Activated B cell treated with CpG ODN at 0.5 μM for 24 hours (primary cell): ENCODE measurements at regions of chr11 and their contacts with region 1.

Region 1: DNA sequence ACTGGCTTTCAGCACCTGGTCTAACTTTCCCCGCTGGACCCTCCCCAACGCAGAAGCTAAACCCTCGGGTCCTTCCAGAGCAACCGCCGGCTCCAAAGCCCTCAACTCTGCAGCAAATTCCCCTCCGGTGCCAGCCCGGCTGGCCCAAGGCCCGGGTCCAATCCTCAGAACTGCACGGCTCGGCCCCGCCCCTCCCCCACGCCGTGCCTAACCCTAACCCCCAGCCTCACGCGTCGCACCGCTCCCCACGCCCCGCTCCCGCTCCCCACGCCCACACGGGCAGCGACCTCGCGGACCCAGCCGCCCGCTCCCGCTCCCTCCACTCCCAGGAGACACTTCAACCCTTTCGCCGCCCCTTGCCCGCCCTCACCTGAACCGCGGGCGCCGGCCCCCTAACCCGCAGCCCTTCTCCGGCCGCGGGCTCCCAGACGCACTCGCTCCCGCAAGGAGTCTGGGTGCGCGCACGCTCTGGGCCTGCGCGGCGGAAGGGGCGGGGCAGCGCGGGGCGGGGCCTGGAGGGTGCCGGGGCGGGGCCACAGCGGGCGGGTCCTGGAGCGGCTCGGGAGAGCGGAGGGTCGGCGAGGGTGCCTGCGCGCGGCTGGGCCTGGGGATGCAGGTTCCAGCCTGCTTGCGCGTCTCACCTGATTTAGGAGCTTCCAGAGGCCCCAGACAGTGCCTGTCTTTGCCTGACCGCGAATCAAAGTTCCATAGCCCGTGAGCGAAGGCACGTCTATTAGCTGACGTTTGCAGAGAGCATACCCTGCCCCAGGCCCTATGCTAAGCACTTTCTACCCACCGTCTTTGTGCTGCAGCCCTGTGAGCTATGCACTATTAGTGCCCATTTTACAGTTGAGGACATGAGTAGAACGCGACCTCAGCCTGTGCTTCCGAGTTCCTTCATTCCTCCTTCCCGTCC is at the start of gene NFRKB:
- DNase-seq: peak; percentile 92
- ATAC-seq: peak; percentile 97
- H3K4me3 Mint-ChIP-seq: peak within 1 kb of the TSS; percentile 88
- H3K27ac Mint-ChIP-seq: peak within 1 kb of the TSS; percentile 70
- H3K4me1 Mint-ChIP-seq: peaks cover 19% of the 10 kb centered on the region
- H3K27me3 Mint-ChIP-seq: no peaks in the 10 kb centered on the region
- CTCF ChIP-seq: no peak
- total RNA-seq, gene NFRKB: 27.2 and 28.9 TPM in 2 replicates

Region 2: DNA sequence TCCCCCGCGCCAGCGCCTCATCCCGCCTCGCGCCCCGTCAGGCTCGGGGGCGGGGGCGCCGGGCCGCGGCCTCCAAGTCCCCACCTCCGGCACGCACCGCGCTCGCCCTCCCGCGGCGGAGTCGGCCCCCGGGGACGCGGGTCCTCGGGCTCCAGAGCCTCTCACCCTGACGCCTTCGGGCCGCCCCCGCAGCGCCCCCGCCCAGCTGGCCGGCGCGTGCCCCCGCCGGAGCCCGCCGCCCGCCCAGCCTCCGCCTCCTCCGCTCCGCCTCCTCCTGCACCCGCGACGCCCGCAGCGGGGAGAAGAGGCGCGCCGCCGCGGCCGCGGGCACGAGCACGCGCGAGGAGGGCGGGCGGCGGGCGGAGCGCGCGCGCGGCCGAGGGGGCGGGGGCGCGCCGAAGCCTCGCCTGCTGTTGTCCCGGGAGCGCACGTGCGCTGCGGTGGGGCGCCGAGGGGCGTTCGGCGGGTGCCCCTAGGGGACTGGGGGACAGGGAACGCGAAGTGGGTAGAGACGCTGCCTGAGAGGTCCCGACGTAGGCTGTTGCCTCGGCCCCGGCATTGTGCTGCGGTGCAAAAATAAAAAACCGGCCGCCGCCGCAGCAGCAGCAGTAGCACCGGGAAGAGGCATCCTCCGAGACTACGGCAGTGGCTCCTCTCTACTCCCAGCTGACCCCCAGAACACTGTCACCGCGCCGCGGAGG is 615.9 kb before region 1 on chr11:
- CTCF ChIA-PET with region 1: no interaction called
- POLR2A ChIA-PET with region 1: no interaction called
- intact Hi-C with region 1: loop called (anchors 1 kb)
- DNase-seq: peak; percentile 73
- ATAC-seq: peak; percentile 80
- H3K4me3 Mint-ChIP-seq: peak overlapping the region; percentile 79
- H3K27ac Mint-ChIP-seq: peak overlapping the region; percentile 47
- H3K4me1 Mint-ChIP-seq: peaks cover 24% of the 10 kb centered on the region
- H3K27me3 Mint-ChIP-seq: peaks cover 26% of the 10 kb centered on the region
- CTCF ChIP-seq: no peak

Region 3: DNA sequence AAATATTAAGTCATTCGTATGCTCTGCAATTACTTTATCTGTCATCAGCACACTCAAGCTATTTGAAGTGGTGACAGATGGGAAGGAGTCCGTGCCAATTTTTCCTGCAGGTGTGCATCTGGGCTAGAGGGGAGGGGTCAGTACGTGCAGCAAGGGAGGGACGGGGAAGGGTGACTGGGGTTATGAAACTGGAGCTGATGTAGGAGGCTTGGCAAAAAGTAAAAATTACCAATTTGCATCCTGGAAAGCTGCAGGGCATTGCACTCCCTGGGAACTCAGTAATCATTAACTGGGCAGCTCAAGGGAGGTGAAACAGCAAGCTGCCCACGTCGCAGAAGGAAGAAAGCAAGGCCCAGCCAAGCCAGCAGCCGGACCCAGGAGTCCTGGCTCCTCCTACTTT is 166.8 kb before region 1 on chr11:
- CTCF ChIA-PET with region 1: no interaction called
- POLR2A ChIA-PET with region 1: no interaction called
- intact Hi-C with region 1: no loop called
- DNase-seq: no peak
- ATAC-seq: no peak
- H3K4me3 Mint-ChIP-seq: no peak overlapping the region
- H3K27ac Mint-ChIP-seq: no peak overlapping the region
- H3K4me1 Mint-ChIP-seq: no peaks in the 10 kb centered on the region
- H3K27me3 Mint-ChIP-seq: no peaks in the 10 kb centered on the region
- CTCF ChIP-seq: no peak

Region 4: DNA sequence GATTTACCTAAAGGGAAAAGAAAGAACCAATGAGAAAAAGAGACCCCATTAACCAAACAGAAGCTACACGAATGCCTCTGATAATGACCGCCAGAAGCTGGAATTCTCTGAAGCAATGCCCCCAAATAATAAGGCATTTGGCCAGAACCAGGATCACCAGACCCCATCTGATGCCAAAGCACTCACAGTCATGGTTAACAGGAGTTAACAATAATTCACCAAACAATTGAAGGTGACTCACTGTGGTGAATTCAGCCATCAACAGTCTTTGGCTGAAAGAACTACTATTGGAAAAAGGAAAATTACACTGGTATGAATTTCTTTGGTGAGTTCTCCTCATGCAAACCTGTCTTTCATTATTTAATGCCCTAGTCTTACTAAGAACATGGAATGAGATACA is 21.8 kb after region 1 on chr11:
- CTCF ChIA-PET with region 1: no interaction called
- POLR2A ChIA-PET with region 1: interaction called, 11 read pairs
- intact Hi-C with region 1: loop called (anchors 2 kb)
- DNase-seq: no peak
- ATAC-seq: no peak
- H3K4me3 Mint-ChIP-seq: no peak overlapping the region
- H3K27ac Mint-ChIP-seq: no peak overlapping the region
- H3K4me1 Mint-ChIP-seq: no peaks in the 10 kb centered on the region
- H3K27me3 Mint-ChIP-seq: no peaks in the 10 kb centered on the region
- CTCF ChIP-seq: no peak

Region 5: DNA sequence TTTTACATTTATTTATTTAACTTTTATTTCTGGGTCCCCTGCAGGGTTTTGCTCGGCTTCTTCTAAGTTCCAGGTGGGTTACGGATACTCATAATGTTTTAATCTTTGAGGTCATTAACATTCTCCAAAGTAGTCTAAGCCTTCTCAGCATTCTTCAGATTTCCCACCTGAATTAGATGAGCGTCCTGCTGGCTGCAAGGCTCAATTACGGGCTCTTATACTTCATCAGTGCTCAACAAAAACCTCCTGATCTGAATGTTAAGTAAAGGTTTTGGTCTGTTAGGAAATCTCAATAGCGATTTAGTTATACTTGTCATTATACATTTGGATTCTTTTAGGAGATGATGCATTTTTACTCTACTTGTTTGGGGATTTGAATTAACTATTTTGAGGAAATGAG is 27.3 kb after region 1 on chr11:
- CTCF ChIA-PET with region 1: no interaction called
- POLR2A ChIA-PET with region 1: interaction called, 11 read pairs
- intact Hi-C with region 1: loop called (anchors 2 kb)
- DNase-seq: no peak
- ATAC-seq: no peak
- H3K4me3 Mint-ChIP-seq: no peak overlapping the region
- H3K27ac Mint-ChIP-seq: no peak overlapping the region
- H3K4me1 Mint-ChIP-seq: peaks cover 4% of the 10 kb centered on the region
- H3K27me3 Mint-ChIP-seq: no peaks in the 10 kb centered on the region
- CTCF ChIP-seq: no peak

Region 6: DNA sequence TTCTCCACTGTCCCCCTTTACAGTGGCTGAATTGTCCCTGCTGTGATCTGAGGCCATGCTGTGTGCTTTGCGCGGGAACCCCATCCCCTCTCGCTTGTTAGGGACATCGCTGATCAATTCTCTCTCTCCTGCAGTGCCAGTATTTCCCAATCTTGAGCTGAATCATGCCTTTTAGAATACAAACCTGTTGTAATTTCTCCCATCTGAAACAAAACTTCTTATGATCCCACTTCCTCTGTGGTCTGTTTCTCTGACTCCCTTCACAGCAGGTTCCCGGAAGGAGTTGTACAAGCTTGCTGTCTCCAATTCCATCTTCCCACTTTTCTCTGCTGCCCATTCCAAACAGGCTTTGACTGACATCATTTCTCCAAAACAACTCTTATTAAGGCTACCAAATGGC is 569.9 kb after region 1 on chr11:
- CTCF ChIA-PET with region 1: no interaction called
- POLR2A ChIA-PET with region 1: no interaction called
- intact Hi-C with region 1: no loop called
- DNase-seq: no peak
- ATAC-seq: no peak
- H3K4me3 Mint-ChIP-seq: no peak overlapping the region
- H3K27ac Mint-ChIP-seq: no peak overlapping the region
- H3K4me1 Mint-ChIP-seq: no peaks in the 10 kb centered on the region
- H3K27me3 Mint-ChIP-seq: peaks cover 3% of the 10 kb centered on the region
- CTCF ChIP-seq: no peak

Region 7: DNA sequence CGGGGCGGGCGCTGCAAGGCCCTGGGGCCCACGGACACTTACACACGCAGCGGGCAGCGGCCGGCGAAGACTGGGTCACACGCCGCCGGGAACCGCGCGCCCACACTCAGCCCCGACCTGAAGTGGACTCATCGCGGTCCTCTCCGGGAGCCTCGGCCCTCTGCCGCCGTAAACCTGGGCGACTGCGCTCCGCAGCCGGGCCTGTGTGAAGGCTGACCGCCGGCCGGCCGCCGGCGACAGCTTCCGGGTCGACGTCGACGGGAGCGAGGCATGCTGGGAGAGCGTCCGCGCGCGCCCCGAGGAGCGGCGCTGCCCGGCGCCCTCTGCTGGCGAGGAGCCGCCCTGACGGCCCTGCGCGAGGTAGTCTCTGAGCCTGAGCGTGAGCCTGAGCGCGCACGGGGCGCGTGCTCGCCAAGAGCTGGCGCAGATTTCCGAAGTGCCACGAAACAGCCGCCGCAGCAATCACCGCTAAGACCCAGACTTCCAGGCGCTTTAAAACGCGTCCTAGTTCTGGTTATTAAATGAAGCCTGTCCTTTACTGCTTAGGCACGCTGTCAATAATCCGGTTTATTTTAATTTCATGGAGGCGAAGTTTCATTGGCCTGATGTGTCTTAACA is 1021.0 kb after region 1 on chr11 and contains the start of gene SNX19:
- CTCF ChIA-PET with region 1: no interaction called
- POLR2A ChIA-PET with region 1: interaction called, 8 read pairs
- intact Hi-C with region 1: loop called (anchors 1 kb)
- DNase-seq: peak; percentile 94
- ATAC-seq: peak; percentile 99
- H3K4me3 Mint-ChIP-seq: peak within 1 kb of the TSS; percentile 86
- H3K27ac Mint-ChIP-seq: peak within 1 kb of the TSS; percentile 87
- H3K4me1 Mint-ChIP-seq: peaks cover 37% of the 10 kb centered on the region
- H3K27me3 Mint-ChIP-seq: peaks cover 18% of the 10 kb centered on the region
- CTCF ChIP-seq: peak; percentile 84
- total RNA-seq, gene SNX19: 53.7 and 60.4 TPM in 2 replicates